Activated T-helper 2 cell treated with anti-CD3 and anti-CD28 coated beads, Interferon-gamma antibody, Interleukin-2, Interleukin-4, amounts not matched to agents 10 μg/mL and 5 μg/mL and 100 μg/mL, durations not matched to agents 14 hours and 24 hours and 36 hours (primary cell): ENCODE measurements at regions of chr6 and their contacts with region 1.

Region 1: DNA sequence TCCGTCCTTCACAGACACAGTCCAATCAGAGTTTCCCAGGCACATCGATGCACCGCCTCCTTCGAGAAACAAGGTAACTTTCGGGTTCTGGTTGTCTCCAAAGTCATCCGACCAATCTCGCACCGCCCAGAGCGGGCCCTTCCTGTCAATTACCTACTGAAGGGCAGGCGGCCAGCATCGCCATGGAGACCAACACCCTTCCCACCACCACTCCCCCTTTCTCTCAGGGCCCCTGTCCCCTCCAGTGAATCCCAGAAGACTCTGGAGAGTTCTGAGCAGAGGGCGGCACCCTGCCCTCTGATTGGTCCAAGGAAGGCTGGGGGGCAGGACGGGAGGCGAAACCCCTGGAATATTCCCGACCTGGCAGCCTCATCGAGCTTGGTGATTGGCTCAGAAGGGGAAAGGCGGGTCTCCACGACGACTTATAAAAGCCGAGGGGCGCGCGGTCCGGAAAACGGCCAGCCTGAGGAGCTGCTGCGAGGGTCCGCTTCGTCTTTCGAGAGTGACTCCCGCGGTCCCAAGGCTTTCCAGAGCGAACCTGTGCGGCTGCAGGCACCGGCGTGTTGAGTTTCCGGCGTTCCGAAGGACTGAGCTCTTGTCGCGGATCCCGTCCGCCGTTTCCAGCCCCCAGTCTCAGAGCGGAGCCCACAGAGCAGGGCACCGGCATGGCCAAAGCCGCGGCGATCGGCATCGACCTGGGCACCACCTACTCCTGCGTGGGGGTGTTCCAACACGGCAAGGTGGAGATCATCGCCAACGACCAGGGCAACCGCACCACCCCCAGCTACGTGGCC is at the start of gene HSPA1B:
- DNase-seq: peak; percentile 96
- H3K4me3 Mint-ChIP-seq: peak within 1 kb of the TSS; percentile 85
- H3K27ac Mint-ChIP-seq: peak within 1 kb of the TSS; percentile 95
- H3K4me1 Mint-ChIP-seq: peaks cover 32% of the 10 kb centered on the region
- H3K27me3 Mint-ChIP-seq: no peaks in the 10 kb centered on the region
- total RNA-seq, gene HSPA1B: 116 and 120 TPM in 2 replicates

Region 2: GRCh38 chr6:31575335-31575901 is 252.1 kb before region 1 on chr6 and contains the start of gene TNF:
- intact Hi-C with region 1: loop called (anchors 10 kb)
- DNase-seq: peak; percentile 74
- H3K4me3 Mint-ChIP-seq: peak within 1 kb of the TSS; percentile 92
- H3K27ac Mint-ChIP-seq: peak within 1 kb of the TSS; percentile 95
- H3K4me1 Mint-ChIP-seq: peaks cover 77% of the 10 kb centered on the region
- H3K27me3 Mint-ChIP-seq: peaks cover 4% of the 10 kb centered on the region
- total RNA-seq, gene TNF: 94.4 and 96.8 TPM in 2 replicates

Region 3: GRCh38 chr6:31660381-31661261 is 166.9 kb before region 1 on chr6 and contains the start of gene C6orf47:
- intact Hi-C with region 1: loop called (anchors 2 kb)
- DNase-seq: peak; percentile 66
- H3K4me3 Mint-ChIP-seq: peak within 1 kb of the TSS; percentile 88
- H3K27ac Mint-ChIP-seq: peak within 1 kb of the TSS; percentile 87
- H3K4me1 Mint-ChIP-seq: peaks cover 67% of the 10 kb centered on the region
- H3K27me3 Mint-ChIP-seq: no peaks in the 10 kb centered on the region
- total RNA-seq, gene C6orf47: 18.1 and 19.3 TPM in 2 replicates

Region 4: DNA sequence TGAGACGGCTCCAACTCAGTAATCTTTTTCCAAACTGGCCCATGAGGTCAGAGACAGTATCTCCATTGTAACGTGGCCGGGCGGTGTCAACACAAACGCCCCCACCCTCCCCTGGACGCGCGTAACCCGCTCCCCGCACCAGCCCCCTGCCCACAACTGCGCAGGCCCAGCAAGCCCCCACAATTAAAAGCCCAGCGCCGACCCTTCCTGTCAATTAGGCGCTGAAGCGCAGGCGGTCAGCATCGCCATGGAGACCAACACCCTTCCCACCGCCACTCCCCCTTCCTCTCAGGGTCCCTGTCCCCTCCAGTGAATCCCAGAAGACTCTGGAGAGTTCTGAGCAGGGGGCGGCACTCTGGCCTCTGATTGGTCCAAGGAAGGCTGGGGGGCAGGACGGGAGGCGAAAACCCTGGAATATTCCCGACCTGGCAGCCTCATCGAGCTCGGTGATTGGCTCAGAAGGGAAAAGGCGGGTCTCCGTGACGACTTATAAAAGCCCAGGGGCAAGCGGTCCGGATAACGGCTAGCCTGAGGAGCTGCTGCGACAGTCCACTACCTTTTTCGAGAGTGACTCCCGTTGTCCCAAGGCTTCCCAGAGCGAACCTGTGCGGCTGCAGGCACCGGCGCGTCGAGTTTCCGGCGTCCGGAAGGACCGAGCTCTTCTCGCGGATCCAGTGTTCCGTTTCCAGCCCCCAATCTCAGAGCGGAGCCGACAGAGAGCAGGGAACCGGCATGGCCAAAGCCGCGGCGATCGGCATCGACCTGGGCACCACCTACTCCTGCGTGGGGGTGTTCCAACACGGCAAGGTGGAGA is 12.3 kb before region 1 on chr6 and contains the starts of genes HSPA1A and HSPA1L:
- intact Hi-C with region 1: loop called (anchors 2 kb)
- DNase-seq: peak; percentile 70
- H3K4me3 Mint-ChIP-seq: peak within 1 kb of the TSS; percentile 87
- H3K27ac Mint-ChIP-seq: peak within 1 kb of the TSS; percentile 91
- H3K4me1 Mint-ChIP-seq: peaks cover 36% of the 10 kb centered on the region
- H3K27me3 Mint-ChIP-seq: no peaks in the 10 kb centered on the region
- total RNA-seq, gene HSPA1A: 112 and 118 TPM in 2 replicates
- total RNA-seq, gene HSPA1L: 2.1 and 2.4 TPM in 2 replicates